ENCODE measurements at regions of chr5 and their contacts with region 1.

Region 1: GRCh38 chr5:81425569-81425968 is 31.6 kb upstream of the ACOT12 start:
- DNase-seq: no peak
- H3K4me3 Mint-ChIP-seq: no peak overlapping the region
- H3K27ac Mint-ChIP-seq: no peak overlapping the region
- H3K4me1 Mint-ChIP-seq: peaks cover 63% of the 10 kb centered on the region
- H3K27me3 Mint-ChIP-seq: no peaks in the 10 kb centered on the region
- CTCF ChIP-seq: peak; percentile 63

Region 2: DNA sequence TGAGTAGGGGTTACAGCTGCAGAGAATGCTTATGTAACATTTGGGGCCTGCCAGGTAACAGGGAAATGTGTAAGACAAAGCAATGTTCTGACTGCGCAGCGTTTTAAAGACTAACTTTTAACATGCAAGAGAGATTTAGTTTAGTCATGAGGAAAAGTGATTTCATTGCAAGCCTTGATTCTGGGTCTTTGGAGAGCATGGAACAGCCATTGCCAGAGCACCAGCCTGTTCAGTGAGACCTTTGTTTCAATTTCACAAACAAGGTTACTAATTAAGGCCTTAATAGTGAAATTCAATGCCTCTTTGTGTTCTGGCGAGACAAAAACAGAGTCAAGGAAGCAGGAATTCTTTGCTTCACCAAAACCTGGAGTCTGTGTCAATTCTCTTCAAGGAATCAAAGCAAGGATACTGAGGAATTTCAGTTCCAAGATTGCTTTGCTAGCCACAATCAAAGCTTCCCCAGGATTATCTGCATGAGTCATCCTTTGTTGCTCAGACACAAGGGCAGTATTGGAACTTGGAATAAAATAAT is 178.1 kb before region 1 on chr5:
- CTCF ChIA-PET with region 1: no interaction called
- intact Hi-C with region 1: no loop called
- DNase-seq: no peak
- H3K4me3 Mint-ChIP-seq: no peak overlapping the region
- H3K27ac Mint-ChIP-seq: peak overlapping the region; percentile 36
- H3K4me1 Mint-ChIP-seq: peaks cover 48% of the 10 kb centered on the region
- H3K27me3 Mint-ChIP-seq: no peaks in the 10 kb centered on the region
- CTCF ChIP-seq: no peak

Region 3: DNA sequence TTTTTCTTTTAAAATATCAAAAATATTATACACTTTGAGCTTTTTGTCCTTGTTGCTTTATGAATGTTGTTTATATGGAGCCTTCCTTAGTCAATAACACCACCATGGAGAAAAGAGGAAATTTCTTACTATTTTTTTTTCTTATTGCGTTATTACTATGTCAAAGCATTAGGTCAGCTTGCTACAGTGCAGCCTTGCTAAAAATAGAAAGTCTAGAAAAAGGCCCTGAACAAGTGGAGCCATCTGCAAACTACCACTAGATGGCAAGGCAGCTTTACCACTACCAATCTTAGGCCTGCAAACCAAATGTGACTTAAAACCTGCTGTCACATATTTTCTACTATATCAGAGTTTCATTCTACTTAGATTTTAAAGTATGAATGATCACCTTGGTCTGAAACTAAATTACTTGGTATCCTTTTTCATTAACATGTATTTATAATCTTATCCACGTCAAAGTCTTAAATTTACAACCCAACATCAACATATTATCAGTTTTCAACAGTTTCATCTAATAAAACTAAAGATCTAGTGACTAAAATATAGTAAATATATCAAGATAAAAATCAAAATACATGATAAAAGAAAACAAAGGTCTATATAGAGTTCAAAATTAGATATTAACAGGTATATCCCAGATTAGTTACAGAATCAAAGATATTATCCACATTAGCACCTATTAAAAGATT is 81.5 kb after region 1 on chr5:
- CTCF ChIA-PET with region 1: interaction called, 5 read pairs
- intact Hi-C with region 1: loop called (anchors 2 kb)
- DNase-seq: peak; percentile 61
- H3K4me3 Mint-ChIP-seq: no peak overlapping the region
- H3K27ac Mint-ChIP-seq: no peak overlapping the region
- H3K4me1 Mint-ChIP-seq: no peaks in the 10 kb centered on the region
- H3K27me3 Mint-ChIP-seq: no peaks in the 10 kb centered on the region
- CTCF ChIP-seq: peak; percentile 78

Region 4: GRCh38 chr5:81590498-81591384 is 165.2 kb after region 1 on chr5:
- CTCF ChIA-PET with region 1: no interaction called
- intact Hi-C with region 1: no loop called
- DNase-seq: no peak
- H3K4me3 Mint-ChIP-seq: no peak overlapping the region
- H3K27ac Mint-ChIP-seq: no peak overlapping the region
- H3K4me1 Mint-ChIP-seq: peaks cover 18% of the 10 kb centered on the region
- H3K27me3 Mint-ChIP-seq: no peaks in the 10 kb centered on the region
- CTCF ChIP-seq: no peak

Region 5: GRCh38 chr5:81631124-81631523 is 205.6 kb after region 1 on chr5:
- CTCF ChIA-PET with region 1: no interaction called
- intact Hi-C with region 1: no loop called
- DNase-seq: no peak
- H3K4me3 Mint-ChIP-seq: no peak overlapping the region
- H3K27ac Mint-ChIP-seq: no peak overlapping the region
- H3K4me1 Mint-ChIP-seq: peaks cover 15% of the 10 kb centered on the region
- H3K27me3 Mint-ChIP-seq: no peaks in the 10 kb centered on the region
- CTCF ChIP-seq: no peak

Region 6: DNA sequence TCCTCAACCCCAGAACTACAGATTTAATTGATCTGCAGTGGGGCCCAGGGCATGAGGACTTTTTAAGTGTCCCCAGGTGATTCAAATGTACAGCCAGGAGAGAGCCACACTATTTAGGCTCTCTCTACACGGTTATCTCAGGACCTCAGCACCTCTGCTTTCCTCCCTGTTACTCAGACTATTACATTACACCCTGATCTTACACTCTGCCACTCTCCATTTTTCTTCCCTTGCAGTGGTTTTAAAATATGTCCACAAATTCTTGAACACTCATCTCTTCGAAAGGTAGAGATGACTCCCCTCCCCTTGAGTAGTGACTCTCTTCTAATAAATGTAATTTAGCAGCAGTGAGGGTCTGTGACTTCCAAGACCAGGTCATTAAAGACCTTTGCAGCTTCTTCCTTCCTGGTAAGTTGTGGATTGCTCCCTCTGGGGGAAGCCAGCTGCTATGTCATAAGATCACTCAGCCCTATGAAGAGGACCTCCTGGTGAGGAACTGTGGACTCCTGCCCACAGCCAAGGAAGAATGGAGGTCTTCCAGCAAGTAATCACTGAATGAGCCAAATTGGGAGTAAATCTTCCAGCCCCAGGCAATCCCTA is 412.8 kb after region 1 on chr5:
- CTCF ChIA-PET with region 1: no interaction called
- intact Hi-C with region 1: loop called (anchors 5 kb)
- DNase-seq: peak; percentile 55
- H3K4me3 Mint-ChIP-seq: no peak overlapping the region
- H3K27ac Mint-ChIP-seq: no peak overlapping the region
- H3K4me1 Mint-ChIP-seq: peaks cover 21% of the 10 kb centered on the region
- H3K27me3 Mint-ChIP-seq: no peaks in the 10 kb centered on the region
- CTCF ChIP-seq: peak; percentile 56

Region 7: DNA sequence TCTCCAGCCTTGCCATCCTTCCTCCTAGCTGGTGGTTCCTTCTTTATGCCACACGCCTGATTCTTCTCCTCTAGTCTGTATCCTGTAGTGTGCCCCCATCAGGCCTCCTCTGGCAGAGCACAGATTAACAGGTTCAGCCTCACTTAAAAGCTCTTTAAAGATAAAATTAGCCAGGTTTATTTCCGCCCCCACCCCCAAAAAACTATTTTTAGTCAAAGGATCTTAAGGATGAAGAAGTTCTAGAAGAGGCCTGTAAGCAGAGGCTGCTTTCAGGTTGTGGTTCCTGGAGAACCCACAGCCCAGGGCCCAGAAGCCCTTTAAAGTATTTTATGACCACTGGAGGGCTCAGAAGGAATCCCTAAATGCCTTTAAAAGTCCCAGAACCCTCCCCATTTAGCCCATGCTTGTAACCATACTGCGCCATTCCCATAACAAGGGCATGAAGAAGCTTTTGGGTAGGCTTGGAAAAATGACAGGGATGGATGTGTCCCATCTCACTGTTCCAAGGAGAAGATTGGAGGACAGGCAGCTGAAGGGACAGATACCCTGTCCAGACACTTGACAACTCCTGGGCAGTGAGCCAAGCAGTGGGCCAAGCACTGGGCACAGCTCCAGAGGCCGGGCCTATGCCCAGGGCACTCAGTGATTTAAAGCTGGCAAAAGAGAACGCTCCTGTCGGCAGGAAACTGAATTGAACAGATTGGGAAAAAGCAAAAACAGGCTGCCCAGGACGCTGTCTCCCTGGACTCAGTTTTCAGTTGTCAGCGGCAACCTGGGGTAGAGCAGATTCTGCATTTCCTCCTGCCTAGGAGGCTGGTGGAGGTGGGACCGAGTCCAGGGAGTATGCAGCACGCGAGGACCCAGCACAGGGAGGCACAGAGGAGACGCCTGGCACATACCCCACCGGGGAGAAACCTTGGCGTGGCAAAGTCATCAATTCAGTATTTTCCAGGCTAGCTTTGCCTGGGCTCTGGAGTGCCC is 431.7 kb after region 1 on chr5:
- CTCF ChIA-PET with region 1: no interaction called
- intact Hi-C with region 1: loop called (anchors 5 kb)
- DNase-seq: peak; percentile 86
- H3K4me3 Mint-ChIP-seq: peak overlapping the region; percentile 63
- H3K27ac Mint-ChIP-seq: peak overlapping the region; percentile 52
- H3K4me1 Mint-ChIP-seq: peaks cover 22% of the 10 kb centered on the region
- H3K27me3 Mint-ChIP-seq: no peaks in the 10 kb centered on the region
- CTCF ChIP-seq: no peak

Region 8: GRCh38 chr5:81971712-81972495 is 546.3 kb after region 1 on chr5 and contains the start of gene ATG10:
- CTCF ChIA-PET with region 1: no interaction called
- intact Hi-C with region 1: loop called (anchors 10 kb)
- DNase-seq: peak; percentile 95
- H3K4me3 Mint-ChIP-seq: peak within 1 kb of the TSS; percentile 77
- H3K27ac Mint-ChIP-seq: peak within 1 kb of the TSS; percentile 87
- H3K4me1 Mint-ChIP-seq: no peaks in the 10 kb centered on the region
- H3K27me3 Mint-ChIP-seq: no peaks in the 10 kb centered on the region
- CTCF ChIP-seq: no peak
- total RNA-seq, gene ATG10: 8.9 and 10.0 TPM in 2 replicates

Region 9: DNA sequence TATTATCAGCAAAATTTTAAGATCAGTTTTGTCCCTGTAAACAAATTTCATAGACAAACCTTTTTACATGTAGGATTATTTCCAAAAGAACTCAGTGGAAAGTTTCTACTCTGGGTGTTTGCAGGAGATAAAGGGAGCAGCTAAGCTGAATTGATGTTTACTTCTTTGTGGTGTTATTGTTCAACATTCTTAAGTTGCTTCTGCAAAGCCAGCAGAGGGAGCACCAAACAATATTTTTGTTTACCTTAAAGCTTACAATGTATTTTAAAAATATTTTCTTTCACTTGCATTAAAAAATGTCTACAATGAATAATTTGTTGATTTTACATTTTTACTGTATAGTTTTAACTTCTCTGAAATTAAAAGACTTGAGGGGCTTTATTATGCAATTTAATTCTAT is 681.7 kb after region 1 on chr5:
- CTCF ChIA-PET with region 1: no interaction called
- intact Hi-C with region 1: loop called (anchors 10 kb)
- DNase-seq: peak; percentile 11
- H3K4me3 Mint-ChIP-seq: no peak overlapping the region
- H3K27ac Mint-ChIP-seq: no peak overlapping the region
- H3K4me1 Mint-ChIP-seq: no peaks in the 10 kb centered on the region
- H3K27me3 Mint-ChIP-seq: no peaks in the 10 kb centered on the region
- CTCF ChIP-seq: peak; percentile 54

Region 10: DNA sequence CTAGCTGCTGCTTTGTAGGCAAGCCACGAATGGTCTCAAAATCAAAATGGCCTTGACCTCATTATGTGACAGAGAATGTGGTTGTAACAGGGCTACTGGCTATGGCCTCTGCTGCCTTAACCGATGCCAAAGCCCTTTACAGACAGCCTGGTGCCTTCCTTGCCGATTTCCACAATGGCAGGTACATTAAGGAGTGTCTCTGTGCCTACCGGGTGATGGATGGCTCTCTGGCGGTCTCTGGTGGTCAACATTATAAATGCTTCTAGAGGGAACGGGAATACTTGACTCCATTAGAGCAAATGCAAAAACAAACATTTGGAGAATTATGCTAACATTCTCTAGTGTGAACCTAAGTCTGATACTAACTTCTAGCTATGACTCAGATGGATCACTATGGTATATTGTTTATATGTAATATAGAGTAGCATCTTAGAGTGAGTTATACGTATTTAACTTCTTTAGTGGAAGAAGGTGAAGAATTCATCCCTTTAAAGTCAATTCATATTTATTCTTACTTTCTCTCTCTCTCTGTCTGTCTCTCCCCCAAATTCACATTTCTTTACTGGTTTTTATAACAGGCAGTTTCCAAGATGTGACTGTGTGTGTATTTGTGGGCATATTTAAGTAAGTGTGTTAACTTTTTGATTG is 800.1 kb after region 1 on chr5:
- CTCF ChIA-PET with region 1: no interaction called
- intact Hi-C with region 1: loop called (anchors 1 kb)
- DNase-seq: peak; percentile 81
- H3K4me3 Mint-ChIP-seq: no peak overlapping the region
- H3K27ac Mint-ChIP-seq: no peak overlapping the region
- H3K4me1 Mint-ChIP-seq: no peaks in the 10 kb centered on the region
- H3K27me3 Mint-ChIP-seq: no peaks in the 10 kb centered on the region
- CTCF ChIP-seq: peak; percentile 85